Left ventricle myocardium superior (tissue), 1 donor: ENCODE measurements at regions of chr17 and their contacts with region 1.

Region 1: DNA sequence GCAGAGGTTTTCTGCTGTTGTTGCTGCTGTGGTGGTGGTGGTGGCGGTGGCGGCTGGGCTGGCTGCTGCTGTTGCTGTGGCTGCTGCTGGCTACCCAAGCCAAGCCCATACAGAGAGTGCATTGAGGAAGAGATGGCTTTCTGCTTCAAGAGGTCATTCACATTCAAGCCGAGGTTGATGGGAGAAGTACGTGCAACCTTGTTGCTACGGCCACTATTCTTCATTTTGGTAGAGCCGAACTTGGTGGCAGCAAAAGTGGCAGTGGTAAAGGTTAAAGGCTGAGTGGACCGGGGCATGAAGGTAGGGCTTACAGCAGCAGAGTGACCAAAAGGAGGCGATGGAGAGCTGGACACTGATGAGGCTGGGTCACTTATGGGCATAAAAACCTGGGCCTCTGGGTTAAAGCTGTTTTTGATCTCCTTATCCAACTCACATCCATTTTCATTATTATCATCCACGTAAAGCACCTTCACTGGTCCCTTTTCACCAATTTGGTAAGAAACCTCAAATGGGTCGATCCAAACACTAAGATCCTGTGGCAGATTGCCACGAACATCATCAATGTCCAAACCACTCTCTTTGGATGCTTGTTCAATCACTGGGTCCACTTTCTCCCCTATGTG is 2.8 kb downstream of the TOB1 start:
- DNase-seq: no peak
- ATAC-seq: no peak

Region 2: GRCh38 chr17:50935201-50935995 is 72.1 kb after region 1 on chr17:
- intact Hi-C with region 1: loop called (anchors 5 kb)
- DNase-seq: peak; percentile 71
- ATAC-seq: peak; percentile 10